ENCODE measurements at regions of chr1 and their contacts with region 1.

Region 1: DNA sequence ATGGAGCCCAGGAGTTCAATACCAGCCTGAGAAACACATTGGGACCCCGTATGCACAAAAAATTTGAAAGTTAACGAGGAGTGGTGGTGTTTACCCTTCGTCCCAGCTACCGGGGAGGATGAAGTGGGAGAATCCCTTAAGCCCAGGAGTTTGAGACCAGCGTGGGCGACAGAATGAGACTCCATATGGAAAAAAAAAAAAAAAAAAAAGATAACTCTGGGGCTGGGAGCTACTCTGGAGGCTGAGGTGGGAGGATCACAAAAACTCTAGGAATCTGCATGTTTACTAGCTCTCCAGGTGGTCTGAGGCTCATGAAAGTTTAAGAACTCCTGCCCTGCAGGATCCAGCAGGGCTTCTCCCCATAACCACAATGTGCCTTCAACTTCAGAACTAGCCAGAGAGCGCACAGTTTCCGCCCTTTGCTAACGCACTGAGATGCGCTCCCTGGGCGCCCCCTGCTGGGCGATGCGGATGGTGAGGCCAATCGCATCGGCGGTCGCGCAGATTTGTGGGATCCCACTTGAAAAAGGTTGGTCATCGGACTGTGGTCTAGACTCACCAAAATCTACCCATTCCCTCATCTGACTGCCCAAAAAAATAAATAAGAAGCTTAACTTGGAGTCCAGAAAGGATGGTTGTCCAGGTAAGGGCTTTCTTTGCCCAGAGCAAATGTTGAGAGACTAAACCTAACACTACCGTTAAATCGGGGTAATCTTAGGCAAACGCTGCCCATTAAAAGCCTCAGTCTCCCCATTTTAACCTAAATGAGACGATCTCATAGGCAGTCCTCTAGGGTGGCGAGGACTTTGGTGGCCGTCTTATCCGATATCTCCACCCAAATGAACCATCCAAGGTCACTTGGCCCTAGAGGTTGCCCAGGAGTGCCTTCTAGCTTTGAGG is 8.8 kb downstream of the ZNF683 start:
- DNase-seq: peak; percentile 56
- H3K4me3 ChIP-seq: no peak overlapping the region
- H3K27ac ChIP-seq: no peak overlapping the region
- H3K4me1 ChIP-seq: peaks cover 14% of the 10 kb centered on the region
- H3K27me3 ChIP-seq: no peaks in the 10 kb centered on the region
- CTCF ChIP-seq: peak; percentile 94 to 98

Region 2: DNA sequence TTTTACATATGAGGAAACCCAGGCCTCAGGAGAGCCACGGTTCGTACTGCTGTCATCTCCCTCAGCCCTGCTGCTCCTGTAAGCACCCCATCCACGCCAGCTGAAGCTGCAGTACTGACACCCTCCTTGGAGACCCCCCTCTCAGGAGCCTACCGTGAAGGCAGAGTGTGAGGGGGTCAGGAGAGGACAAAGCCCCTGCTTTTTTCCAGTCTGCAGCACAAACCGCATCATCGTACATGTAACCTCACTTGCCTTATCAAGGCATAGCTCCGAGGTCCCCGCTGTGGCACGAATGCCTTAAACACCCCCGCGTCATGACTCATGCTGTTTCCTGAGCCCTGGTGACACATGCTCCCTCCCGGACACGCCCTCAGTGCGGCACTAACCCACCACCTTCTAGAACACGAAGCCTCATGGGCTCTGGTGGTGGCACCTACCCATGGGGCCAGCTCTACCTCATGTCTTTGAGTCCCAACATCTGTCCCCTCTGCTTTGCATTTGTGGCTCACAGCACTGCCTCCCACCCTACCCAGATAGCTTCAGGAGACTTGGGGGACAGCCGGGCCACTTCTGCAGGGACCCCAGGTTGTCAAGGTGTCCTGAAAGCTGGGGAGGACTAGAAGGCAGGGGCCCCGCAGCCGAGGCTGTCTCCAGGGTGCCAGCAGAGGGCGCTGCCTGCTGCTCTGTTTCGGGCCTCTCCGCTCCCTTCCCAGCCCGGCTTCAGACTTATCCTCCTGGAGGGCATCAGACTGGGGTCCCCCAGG is 79.0 kb before region 1 on chr1:
- CTCF ChIA-PET with region 1: interaction called, 7 read pairs
- dilution Hi-C with region 1: no loop called
- in situ Hi-C with region 1: no loop called
- intact Hi-C with region 1: loop called (anchors 1 kb)
- DNase-seq: peak; percentile 87
- H3K4me3 ChIP-seq: no peak overlapping the region
- H3K27ac ChIP-seq: peak overlapping the region; percentile 21
- H3K4me1 ChIP-seq: peaks cover 48% of the 10 kb centered on the region
- H3K27me3 ChIP-seq: no peaks in the 10 kb centered on the region
- CTCF ChIP-seq: peak; percentile 45 to 75

Measured in mammary epithelial cell (primary cell).